Activated CD4-positive, alpha-beta memory T cell treated with anti-CD3 and anti-CD28 coated beads for 36 hours (primary cell): ENCODE measurements at regions of chr1 and their contacts with region 1.

Region 1: DNA sequence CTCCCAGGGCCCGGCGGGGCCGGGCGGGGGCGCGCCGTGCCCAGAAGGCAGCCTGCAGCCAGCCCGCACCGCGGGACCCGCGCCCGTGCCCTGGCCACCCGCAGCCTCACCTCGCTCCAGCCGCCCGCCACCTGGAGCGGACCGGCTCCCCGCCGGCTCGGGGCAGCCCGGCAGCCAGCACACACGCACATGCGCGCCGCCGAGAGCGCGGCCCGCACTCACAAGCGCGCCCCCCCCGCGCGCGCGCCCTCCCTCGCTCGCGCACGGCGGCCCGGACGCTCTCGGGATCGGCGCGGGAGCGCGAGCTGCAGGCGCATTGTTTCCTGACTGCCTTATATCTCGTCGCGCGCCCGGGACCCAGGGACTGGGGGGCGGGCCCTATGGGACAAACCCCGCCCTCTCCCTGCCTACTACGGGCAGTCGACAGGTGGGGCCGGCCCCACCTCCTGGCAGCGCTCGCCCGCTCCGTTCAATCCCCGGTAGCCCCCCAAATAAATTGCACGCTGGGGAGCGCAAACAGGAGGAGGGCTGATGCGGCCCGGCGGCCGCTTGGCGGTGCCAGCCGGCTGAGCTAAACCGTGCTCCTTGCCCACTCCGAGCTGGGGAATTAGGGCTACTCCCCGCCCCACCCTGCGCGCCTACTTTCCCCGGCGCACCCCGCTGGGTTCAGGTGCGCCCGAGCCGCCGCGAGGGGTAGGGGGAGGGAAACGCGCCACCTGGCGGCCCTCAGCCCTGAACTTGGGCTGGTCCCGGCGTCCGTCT is at the start of gene MYCL:
- DNase-seq: peak; percentile 78
- H3K4me3 Mint-ChIP-seq: peak within 1 kb of the TSS; percentile 61
- H3K27ac Mint-ChIP-seq: no peak within 1 kb of the TSS
- H3K4me1 Mint-ChIP-seq: peaks cover 6% of the 10 kb centered on the region
- H3K27me3 Mint-ChIP-seq: peaks cover 43% of the 10 kb centered on the region
- total RNA-seq, gene MYCL: 0.07 TPM in 1 of 2 experiments, not detected in the other

Region 2: GRCh38 chr1:39639305-39640130 is 262.4 kb before region 1 on chr1 and contains the start of gene HEYL:
- CTCF ChIA-PET with region 1: no interaction called
- POLR2A ChIA-PET with region 1: no interaction called
- intact Hi-C with region 1: no loop called
- DNase-seq: peak; percentile 81
- H3K4me3 Mint-ChIP-seq: peak within 1 kb of the TSS; percentile 57
- H3K27ac Mint-ChIP-seq: no peak within 1 kb of the TSS
- H3K4me1 Mint-ChIP-seq: peaks cover 3% of the 10 kb centered on the region
- H3K27me3 Mint-ChIP-seq: peaks cover 29% of the 10 kb centered on the region
- total RNA-seq, gene HEYL: 0.19 TPM

Region 3: DNA sequence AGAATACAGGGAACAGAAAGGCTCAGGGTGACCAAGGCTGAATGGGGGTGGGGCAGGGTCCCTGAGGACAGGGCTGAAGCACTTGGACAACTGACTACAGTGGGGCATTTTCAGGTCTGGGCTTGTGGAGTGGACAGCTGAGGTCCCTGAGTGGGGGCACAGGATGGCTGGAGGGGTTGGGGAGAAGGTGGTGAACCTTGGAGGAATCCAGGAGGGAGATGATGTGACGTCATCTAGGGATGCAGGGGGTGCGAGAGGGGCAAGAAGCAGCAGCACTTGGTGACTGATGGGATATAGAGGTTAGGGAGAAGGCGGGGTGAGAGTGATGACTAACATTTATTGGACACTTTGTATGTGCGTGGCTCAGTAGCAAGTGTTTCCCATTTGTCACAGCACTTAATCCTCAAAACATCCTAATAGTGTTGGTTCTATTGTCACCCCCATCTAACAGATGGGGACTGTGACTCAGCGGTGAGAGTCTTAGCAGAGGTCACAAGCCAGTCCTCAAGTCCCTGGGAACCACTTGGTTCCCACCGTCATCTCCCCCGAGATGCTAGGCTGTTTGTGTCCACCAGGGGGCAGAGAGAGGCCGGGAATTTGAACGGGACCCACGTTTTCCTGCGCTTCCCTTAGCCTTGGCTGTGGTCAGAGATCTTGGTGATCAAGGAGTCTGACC is 85.3 kb before region 1 on chr1:
- CTCF ChIA-PET with region 1: interaction called, 104 read pairs
- POLR2A ChIA-PET with region 1: no interaction called
- intact Hi-C with region 1: loop called (anchors 1 kb)
- DNase-seq: peak; percentile 73
- H3K4me3 Mint-ChIP-seq: no peak overlapping the region
- H3K27ac Mint-ChIP-seq: no peak overlapping the region
- H3K4me1 Mint-ChIP-seq: peaks cover 16% of the 10 kb centered on the region
- H3K27me3 Mint-ChIP-seq: peaks cover 7% of the 10 kb centered on the region

Region 4: DNA sequence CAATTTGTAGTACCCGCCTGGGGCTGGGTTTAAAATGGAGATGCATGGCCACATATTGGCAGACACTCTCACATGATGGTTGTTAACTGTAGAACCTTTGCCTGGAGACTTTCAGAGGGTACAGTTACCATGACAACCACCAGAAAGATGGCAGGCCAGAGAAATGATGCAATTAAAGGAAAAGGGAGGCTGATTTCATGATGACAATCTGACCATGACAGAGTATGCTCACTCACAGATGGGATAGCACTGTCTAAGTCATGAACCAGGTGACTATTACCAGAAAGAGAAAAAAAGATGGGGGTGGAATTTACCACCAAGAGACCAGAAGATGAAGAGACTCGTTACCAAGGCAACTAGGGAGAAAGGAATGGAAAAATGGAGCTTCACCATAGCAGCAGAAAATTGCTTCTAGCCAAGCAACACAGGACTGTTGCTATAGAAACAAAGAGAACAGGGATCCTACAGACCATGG is 15.1 kb before region 1 on chr1:
- CTCF ChIA-PET with region 1: interaction called, 15 read pairs
- POLR2A ChIA-PET with region 1: no interaction called
- intact Hi-C with region 1: no loop called
- DNase-seq: no peak
- H3K4me3 Mint-ChIP-seq: no peak overlapping the region
- H3K27ac Mint-ChIP-seq: no peak overlapping the region
- H3K4me1 Mint-ChIP-seq: peaks cover 9% of the 10 kb centered on the region
- H3K27me3 Mint-ChIP-seq: peaks cover 4% of the 10 kb centered on the region

Region 5: DNA sequence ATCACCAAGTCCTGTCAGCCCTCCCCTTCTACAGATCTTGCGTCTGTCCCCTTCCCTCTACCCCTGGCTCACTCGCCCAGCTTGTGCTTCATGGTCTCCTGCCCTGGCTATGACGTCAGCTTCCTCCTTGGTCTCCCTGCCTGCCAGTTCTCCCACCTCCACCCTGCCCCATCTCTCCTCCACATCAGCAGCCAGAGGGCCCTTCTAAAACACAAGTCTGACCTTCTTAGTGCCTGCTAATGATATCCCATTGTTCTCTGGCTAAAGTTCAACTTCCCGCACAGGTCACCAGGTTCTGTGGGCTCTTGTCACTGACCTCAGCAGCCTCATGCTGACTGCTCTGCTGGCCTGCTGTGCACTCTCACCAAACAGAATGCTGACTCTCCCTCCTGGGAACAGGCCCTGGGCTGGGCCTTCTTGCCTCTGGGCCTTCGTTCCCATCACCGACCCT is 24.5 kb after region 1 on chr1:
- CTCF ChIA-PET with region 1: interaction called, 16 read pairs
- POLR2A ChIA-PET with region 1: no interaction called
- intact Hi-C with region 1: no loop called
- DNase-seq: no peak
- H3K4me3 Mint-ChIP-seq: no peak overlapping the region
- H3K27ac Mint-ChIP-seq: no peak overlapping the region
- H3K4me1 Mint-ChIP-seq: no peaks in the 10 kb centered on the region
- H3K27me3 Mint-ChIP-seq: peaks cover 4% of the 10 kb centered on the region

Region 6: DNA sequence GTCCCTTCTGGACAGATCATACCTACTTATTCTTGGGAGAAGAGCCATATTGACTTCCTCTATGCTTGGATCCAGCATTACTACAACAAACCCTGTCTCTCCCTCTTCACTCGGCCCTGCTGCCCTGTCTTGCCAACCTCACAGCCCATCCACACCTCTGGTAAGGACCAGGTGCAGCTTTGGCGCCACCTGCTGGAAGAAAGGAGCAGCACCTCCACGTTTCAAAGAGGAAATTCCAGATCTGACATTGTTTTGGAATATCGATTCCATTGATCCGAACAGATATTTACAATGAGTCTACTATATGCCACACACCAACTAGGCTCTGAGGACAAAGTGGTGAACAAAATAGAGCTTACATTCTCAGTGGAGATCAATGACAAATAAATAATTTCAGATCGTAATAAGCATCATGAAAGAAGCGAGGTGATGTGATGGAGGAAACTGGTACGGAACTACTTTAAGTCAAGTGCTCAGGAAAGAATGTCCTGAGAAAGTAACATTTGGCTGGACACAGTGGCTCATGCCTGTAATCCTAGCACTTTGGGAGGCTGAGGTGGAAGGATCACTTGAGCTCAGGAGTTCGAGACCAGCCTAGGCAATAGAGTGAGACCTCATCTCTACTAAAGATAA is 71.7 kb after region 1 on chr1:
- CTCF ChIA-PET with region 1: interaction called, 38 read pairs
- POLR2A ChIA-PET with region 1: no interaction called
- intact Hi-C with region 1: loop called (anchors 5 kb)
- DNase-seq: peak; percentile 79
- H3K4me3 Mint-ChIP-seq: no peak overlapping the region
- H3K27ac Mint-ChIP-seq: no peak overlapping the region
- H3K4me1 Mint-ChIP-seq: peaks cover 4% of the 10 kb centered on the region
- H3K27me3 Mint-ChIP-seq: no peaks in the 10 kb centered on the region